Activated CD8-positive, alpha-beta memory T cell treated with anti-CD3 and anti-CD28 coated beads, Interleukin-2, amount 10 ng/mL, durations not matched to agents 7 days and 5 days (primary cell): ENCODE measurements at regions of chr14 and their contacts with region 1.

Region 1: GRCh38 chr14:104723648-104724406 is at the start of gene ADSS1:
- DNase-seq: peak; percentile 69
- ATAC-seq: peak; percentile 84
- H3K4me3 Mint-ChIP-seq: peak within 1 kb of the TSS; percentile 68
- H3K27ac Mint-ChIP-seq: no peak within 1 kb of the TSS
- H3K4me1 Mint-ChIP-seq: peaks cover 1% of the 10 kb centered on the region
- H3K27me3 Mint-ChIP-seq: no peaks in the 10 kb centered on the region
- total RNA-seq, gene ADSS1: 2.5 to 3.5 TPM

Region 2: GRCh38 chr14:104746934-104747481 is 23.2 kb after region 1 on chr14:
- CTCF ChIA-PET with region 1: interaction called, 13 read pairs
- DNase-seq: no peak
- ATAC-seq: no peak
- H3K4me3 Mint-ChIP-seq: no peak overlapping the region
- H3K27ac Mint-ChIP-seq: no peak overlapping the region
- H3K4me1 Mint-ChIP-seq: peaks cover 28% of the 10 kb centered on the region
- H3K27me3 Mint-ChIP-seq: no peaks in the 10 kb centered on the region

Region 3: GRCh38 chr14:104970231-104971101 is 246.6 kb after region 1 on chr14:
- CTCF ChIA-PET with region 1: no interaction called
- DNase-seq: no peak
- ATAC-seq: no peak
- H3K4me3 Mint-ChIP-seq: no peak overlapping the region
- H3K27ac Mint-ChIP-seq: no peak overlapping the region
- H3K4me1 Mint-ChIP-seq: peaks cover 2% of the 10 kb centered on the region
- H3K27me3 Mint-ChIP-seq: peaks cover 15% of the 10 kb centered on the region